ENCODE measurements at regions of chr1 and their contacts with region 1.

Region 1: DNA sequence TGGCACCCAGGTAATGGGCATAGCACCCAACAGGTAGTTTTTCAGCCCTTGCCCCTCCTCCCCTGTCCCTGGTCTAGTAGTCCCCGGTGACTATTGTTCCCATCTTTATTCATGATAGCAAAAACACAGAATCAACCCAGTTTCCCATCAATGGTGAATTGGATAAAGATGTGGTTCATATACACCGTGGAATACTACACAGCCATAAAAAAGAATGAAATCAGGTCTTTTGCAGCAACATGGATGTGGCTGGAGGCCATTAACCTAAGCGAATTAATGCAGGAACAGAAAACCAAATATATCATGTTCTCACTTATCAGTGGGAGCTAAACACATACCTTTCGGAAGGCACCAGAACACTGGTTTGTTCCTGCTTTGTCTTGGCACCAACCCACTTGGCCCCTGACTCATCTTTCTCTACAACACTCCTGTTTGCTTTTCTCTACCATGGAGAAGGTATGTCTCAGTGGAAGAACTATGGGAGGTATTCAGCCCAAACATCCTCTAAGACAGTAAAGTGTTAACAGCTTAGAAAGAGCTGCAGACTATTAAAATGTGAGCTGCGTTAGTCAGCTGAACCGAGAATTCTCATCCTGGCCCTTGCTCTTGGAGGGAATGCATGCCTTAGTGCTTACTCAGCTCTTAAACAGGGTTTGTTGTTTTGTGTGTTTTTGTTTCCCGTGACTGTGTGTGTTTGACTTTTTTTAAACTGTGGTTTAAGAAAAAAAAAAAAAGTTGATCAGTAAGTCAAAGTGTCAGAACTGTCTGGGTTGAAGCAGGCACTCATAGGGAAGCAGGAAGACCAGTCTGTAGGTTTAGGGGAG is 203.0 kb downstream of the TOMM20 start:
- DNase-seq: peak; percentile 97
- H3K4me3 ChIP-seq: no peak overlapping the region
- H3K27ac ChIP-seq: peak overlapping the region; percentile 94
- H3K27me3 ChIP-seq: no peaks in the 10 kb centered on the region
- CTCF ChIP-seq: no peak

Region 2: GRCh38 chr1:234899041-234899729 is 26.5 kb before region 1 on chr1:
- CTCF ChIA-PET with region 1: no interaction called
- POLR2A ChIA-PET with region 1: no interaction called
- DNase-seq: no peak
- H3K4me3 ChIP-seq: no peak overlapping the region
- H3K27ac ChIP-seq: no peak overlapping the region
- H3K27me3 ChIP-seq: no peaks in the 10 kb centered on the region
- CTCF ChIP-seq: no peak

Region 3: DNA sequence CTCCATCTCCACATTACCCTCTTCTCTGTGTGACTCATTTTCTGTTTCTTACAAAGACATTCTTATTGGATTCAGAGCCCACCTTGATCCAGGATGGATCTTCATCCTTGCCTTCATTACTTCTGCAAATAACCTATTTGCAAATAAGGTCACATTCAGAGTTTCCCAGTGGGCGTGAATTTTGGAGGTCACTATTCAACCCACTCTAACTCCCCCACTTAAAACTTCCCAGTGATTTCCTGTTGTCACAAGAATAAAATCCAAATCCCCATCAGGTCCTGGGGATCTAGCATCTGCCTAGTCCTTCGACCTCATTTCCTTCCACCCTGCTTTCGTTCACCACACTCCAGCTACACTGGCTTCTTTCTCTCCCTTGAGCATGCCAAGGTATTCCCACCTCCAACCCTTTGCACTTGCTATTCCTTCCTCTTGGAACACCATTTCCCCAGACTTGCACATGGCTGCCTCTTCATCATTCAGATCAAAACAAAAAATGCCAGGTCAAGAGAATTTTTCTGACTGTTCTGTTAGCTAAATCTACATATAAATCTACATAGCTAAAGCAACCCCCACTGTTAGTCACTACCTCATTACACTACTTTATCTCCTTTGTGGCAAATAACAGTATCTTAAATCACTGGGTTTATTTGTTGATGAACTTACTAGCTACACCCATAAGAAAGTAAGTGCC is 15.8 kb after region 1 on chr1:
- CTCF ChIA-PET with region 1: no interaction called
- POLR2A ChIA-PET with region 1: no interaction called
- DNase-seq: no peak
- H3K4me3 ChIP-seq: no peak overlapping the region
- H3K27ac ChIP-seq: no peak overlapping the region
- H3K27me3 ChIP-seq: no peaks in the 10 kb centered on the region
- CTCF ChIP-seq: no peak

Region 4: DNA sequence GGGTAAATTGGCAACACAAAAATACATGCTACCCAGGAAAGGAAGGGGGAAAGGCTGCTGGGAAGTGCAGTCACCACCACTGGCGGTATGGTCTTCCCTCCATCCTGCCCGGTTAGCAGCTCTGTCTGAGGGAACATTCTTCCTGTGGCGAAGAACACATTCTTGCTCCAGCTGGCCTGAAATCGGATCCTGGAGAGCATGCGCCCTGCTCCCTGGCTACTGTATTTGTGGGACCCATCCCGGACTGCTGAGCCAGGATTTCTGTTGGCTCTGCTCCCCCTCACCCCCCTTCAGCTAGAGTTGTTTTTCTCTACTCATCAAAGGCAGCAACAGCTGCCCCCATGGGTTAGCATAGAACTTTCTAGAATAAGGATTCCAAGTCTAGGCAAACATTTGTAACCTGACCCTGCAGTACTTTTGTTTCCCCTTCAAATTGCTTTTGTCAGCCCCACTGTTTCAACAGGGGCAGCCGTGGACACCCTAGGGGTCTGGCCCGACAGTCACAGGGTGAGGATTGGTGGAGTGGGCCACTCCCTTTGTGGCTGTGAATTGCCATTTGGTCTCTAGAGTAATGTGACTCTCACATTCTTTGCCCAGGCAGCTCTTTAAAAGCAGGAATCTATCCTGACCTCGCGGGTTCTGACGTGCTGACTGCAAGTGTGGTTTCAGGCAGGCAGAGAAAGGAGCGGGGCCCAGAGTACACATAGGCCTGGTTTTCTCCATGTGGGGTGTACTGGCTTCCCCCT is 45.3 kb after region 1 on chr1:
- CTCF ChIA-PET with region 1: no interaction called
- POLR2A ChIA-PET with region 1: interaction called, 16 read pairs
- DNase-seq: peak; percentile 97
- H3K4me3 ChIP-seq: peak overlapping the region; percentile 13; the same call in 1 of the 2 replicates
- H3K27ac ChIP-seq: peak overlapping the region; percentile 100
- H3K27me3 ChIP-seq: no peaks in the 10 kb centered on the region
- CTCF ChIP-seq: no peak

Measured in AG04450 (cell line).